ENCODE measurements at regions of chr17 and their contacts with region 1.

Region 1: GRCh38 chr17:385926-386876 is 33.6 kb upstream of the RPH3AL start:
- DNase-seq: peak; percentile 46
- H3K4me3 Mint-ChIP-seq: peak overlapping the region; percentile 86
- H3K27ac Mint-ChIP-seq: peak overlapping the region; percentile 11
- H3K4me1 Mint-ChIP-seq: peaks cover 10% of the 10 kb centered on the region
- H3K27me3 Mint-ChIP-seq: peaks cover 29% of the 10 kb centered on the region

Region 2: DNA sequence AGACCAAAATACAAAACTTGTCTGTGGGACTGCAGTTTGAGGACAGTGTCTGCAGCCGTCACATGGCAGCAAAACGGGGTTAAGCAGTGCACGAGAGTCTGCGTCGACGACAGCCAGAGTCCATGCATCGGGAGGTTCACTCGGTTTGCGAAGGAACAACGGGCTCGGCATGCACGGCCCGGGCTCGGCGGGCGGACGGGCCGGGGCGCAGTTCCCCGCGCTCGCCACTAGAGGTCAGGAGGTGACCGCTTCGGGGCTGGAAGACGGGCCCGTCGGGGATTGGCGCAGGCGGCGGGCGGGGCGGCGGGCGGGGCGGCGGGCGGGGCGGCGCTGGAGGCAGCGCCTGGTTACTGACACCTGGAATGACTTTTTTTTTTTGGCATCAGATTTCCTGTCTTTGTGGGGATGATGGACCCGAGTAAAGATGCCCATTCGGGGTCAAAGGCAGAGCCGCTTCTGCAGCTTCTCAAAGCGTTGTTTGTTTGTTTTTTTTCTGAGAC is 242.4 kb before region 1 on chr17:
- intact Hi-C with region 1: loop called (anchors 2 kb)
- DNase-seq: peak; percentile 83
- H3K4me3 Mint-ChIP-seq: no peak overlapping the region
- H3K27ac Mint-ChIP-seq: no peak overlapping the region
- H3K4me1 Mint-ChIP-seq: no peaks in the 10 kb centered on the region
- H3K27me3 Mint-ChIP-seq: peaks cover 9% of the 10 kb centered on the region

Region 3: DNA sequence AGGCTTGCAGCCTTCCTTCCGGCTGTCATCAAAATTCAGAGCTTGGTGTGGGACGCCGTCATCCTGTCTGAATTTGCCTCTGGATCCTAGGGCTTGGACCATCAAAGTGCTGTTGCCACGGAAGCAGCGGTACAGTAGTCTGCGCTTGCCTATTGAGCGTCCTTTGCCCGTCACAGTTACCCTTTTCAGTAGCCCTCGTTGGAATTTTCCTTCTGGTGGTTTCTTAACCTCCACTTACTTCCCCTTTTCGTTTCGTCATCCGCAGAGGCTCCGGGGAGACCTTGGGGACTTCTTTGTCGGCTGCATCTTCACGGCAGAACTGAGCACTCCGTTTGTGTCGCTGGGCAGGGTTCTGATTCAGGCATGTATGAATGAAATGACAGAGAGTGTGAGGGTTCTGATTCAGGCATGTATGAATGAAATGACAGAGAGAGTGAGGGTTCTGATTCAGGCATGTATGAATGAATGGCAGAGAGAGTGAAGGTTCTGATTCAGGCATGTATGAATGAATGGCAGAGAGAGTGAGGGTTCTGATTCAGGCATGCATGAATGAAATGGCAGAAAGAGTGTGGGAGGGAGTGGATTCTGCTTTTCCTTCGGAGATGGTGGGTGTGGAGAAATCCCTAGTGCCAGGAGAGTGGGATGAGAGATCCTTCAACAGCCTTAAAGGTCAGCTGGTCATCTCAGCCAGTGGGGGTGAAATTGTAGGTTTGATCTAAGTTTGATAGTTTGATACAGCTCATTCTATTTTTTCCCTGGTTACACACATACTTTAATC is 354.2 kb after region 1 on chr17:
- intact Hi-C with region 1: no loop called
- DNase-seq: peak; percentile 11
- H3K4me3 Mint-ChIP-seq: peak overlapping the region; percentile 12
- H3K27ac Mint-ChIP-seq: peak overlapping the region; percentile 64
- H3K4me1 Mint-ChIP-seq: peaks cover 15% of the 10 kb centered on the region
- H3K27me3 Mint-ChIP-seq: no peaks in the 10 kb centered on the region